ENCODE measurements at regions of chr6 and their contacts with region 1.

Region 1: GRCh38 chr6:75775219-75775618 is 26.2 kb downstream of the MYO6 start:
- DNase-seq: peak; percentile 21

Region 2: DNA sequence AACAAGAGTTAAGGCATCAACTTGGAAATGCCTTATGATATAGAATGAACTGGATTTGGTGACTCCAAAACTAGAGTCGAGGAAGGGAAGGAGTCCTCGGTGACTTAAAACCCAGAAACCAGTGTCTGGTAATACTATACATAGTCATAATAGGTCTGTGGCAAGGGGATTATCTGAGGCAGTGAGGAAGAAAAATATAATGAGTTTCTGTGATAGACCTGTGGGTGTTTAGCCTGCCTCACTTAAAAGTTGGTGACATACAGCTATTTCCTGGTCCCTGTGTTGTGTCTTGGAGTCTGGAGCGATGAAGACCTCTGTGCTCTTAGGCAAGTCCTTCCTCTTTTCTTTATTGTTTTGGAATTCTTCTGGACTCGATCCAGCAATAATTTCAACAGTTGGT is 31.2 kb before region 1 on chr6:
- CTCF ChIA-PET with region 1: no interaction called
- POLR2A ChIA-PET with region 1: no interaction called
- DNase-seq: no peak

Region 3: DNA sequence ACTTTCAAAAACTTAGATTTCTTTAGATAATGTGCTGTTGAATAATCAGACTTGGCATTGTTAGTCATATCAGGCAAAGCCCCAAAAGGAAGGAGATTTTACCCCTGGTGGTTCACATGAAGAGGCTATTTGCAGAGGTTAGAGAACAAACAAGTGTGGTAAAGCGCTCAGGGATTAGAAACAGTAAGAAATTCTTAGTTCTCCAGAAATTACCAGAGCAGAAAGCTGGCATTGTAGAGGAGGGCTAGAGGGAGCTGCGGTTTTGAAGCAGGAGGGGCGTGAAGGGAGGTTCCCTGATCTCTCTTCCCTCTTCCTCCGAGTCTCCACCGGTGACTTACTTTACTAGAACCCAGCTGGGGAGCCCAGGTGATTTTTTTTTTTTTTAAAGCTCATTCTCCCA is 16.0 kb before region 1 on chr6:
- CTCF ChIA-PET with region 1: interaction called, 11 read pairs
- POLR2A ChIA-PET with region 1: no interaction called
- DNase-seq: no peak

Region 4: GRCh38 chr6:75818098-75818855 is 43.1 kb after region 1 on chr6:
- CTCF ChIA-PET with region 1: no interaction called
- POLR2A ChIA-PET with region 1: no interaction called
- DNase-seq: no peak